ENCODE measurements at regions of chr9 and their contacts with region 1.

Region 1: DNA sequence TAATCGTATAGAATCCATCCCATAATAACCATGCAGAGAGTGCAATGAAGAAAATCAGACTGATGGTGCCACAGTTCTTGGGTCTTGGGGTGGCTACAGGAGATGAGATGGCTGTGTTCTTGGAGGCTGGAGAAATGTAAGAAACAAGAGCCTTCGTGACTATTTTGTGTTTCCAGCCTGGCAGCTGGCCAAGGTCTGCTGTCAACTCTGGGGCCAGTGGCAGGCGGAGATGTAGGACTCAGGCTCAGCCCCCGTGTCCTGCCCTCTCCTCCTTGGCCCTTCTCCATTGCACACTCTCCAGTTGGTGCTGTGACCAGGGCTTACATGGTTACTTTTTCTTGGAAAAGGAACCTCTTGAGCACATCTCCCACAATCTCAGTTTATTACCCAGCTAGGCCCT is 235.4 kb downstream of the DMRT2 start:
- DNase-seq: no peak
- ATAC-seq: no peak
- H3K4me3 ChIP-seq: no peak overlapping the region
- H3K4me3 Mint-ChIP-seq: no peak overlapping the region
- H3K27ac ChIP-seq: no peak overlapping the region
- H3K27ac Mint-ChIP-seq: no peak overlapping the region
- H3K4me1 ChIP-seq: no peaks in the 10 kb centered on the region
- H3K4me1 Mint-ChIP-seq: no peaks in the 10 kb centered on the region
- H3K27me3 ChIP-seq: no peaks in the 10 kb centered on the region
- H3K27me3 Mint-ChIP-seq: no peaks in the 10 kb centered on the region
- CTCF ChIP-seq: no peak

Region 2: DNA sequence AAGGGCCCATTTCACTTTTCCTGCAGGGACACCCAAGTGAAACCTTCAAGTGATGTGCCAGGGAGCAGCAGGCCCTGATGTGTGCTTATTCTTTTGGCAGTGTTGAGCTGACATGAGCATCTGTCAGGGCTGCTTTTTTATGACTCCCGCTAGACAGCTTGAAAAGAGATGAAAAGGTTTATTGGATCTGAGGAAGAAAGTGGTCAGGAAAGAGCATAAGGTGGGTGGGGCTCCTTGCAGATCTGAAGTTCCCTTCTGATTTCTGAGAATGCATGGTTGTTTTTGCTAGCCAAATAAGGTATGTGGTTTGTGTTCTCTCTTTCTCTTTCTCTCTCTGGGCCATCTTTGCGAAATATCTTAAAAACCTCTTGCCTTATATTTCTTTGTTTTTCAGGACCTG is 80.8 kb after region 1 on chr9:
- CTCF ChIA-PET with region 1: no interaction called
- POLR2A ChIA-PET with region 1: no interaction called
- intact Hi-C with region 1: loop called in 1 of 2 experiments (anchors 2 kb)
- DNase-seq: peak in 3 of 14 experiments; percentile 5 to 63 (median 6)
- ATAC-seq: no peak
- H3K4me3 ChIP-seq: no peak overlapping the region
- H3K4me3 Mint-ChIP-seq: no peak overlapping the region
- H3K27ac ChIP-seq: peak overlapping the region in 1 of 2 donors; percentile 17
- H3K27ac Mint-ChIP-seq: peak overlapping the region; percentile 19
- H3K4me1 ChIP-seq: no peaks in the 10 kb centered on the region
- H3K4me1 Mint-ChIP-seq: no peaks in the 10 kb centered on the region
- H3K27me3 ChIP-seq: no peaks in the 10 kb centered on the region
- H3K27me3 Mint-ChIP-seq: no peaks in the 10 kb centered on the region
- CTCF ChIP-seq: no peak

Measured in CD4-positive, alpha-beta T cell (primary cell).